Common myeloid progenitor, CD34-positive (primary cell): ENCODE measurements at regions of chr7 and their contacts with region 1.

Region 1: GRCh38 chr7:10973061-10973944 is at the start of gene PHF14:
- DNase-seq: peak; percentile 97 to 99 (median 98)
- H3K4me3 ChIP-seq: peak within 1 kb of the TSS; percentile 65 to 93 (median 83)
- H3K27ac ChIP-seq: peak within 1 kb of the TSS; percentile 52 to 81
- H3K4me1 ChIP-seq: peaks cover 8 to 22% (median 14%) of the 10 kb centered on the region in 4 experiments
- H3K27me3 ChIP-seq: no peaks in the 10 kb centered on the region

Region 2: GRCh38 chr7:10708447-10708846 is 264.9 kb before region 1 on chr7:
- CTCF ChIA-PET with region 1: no interaction called
- POLR2A ChIA-PET with region 1: no interaction called
- DNase-seq: peak; percentile 56 to 72 (median 61)
- H3K4me3 ChIP-seq: no peak overlapping the region
- H3K27ac ChIP-seq: no peak overlapping the region
- H3K4me1 ChIP-seq: peaks cover 9 to 19% (median 12%) of the 10 kb centered on the region in 4 experiments
- H3K27me3 ChIP-seq: no peaks in the 10 kb centered on the region

Region 3: DNA sequence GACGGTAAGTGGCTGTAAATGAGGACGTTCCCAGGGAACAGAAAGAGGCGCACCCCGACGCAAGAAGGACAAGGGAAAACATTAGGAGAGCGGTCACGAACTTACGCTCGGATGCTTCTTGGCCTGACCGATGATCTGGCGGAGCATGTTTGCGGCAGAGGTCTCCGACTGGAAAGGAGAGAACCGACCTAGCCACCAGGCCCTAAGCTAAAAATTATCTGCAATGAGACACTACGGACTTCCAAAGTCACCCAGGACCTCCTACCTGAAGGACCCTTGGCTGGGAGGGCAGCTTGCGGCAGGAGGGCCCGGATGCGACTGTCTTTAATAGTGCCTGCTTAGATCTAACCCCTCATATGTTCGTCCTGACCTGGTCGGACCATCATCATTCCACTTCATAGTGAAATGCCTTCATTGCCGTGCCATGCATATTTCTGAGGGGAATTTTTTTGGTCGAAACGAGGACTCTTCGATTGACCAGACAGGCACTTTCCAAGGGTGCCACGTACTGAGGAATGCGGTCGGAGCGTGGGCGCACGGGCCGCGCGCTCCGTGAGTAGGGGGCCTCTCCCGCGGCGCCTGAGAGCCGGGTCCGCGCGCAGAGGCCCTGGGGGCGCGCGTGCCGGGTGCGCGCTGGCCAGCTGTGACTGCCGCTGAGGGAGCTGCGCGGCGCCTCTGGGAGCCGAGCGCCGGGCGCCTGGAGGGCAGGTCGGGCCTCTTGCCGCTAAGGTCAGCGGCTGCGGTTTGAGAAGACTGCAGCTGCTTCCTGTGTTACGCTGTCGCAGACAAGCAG is 33.2 kb before region 1 on chr7:
- CTCF ChIA-PET with region 1: interaction called, 4 read pairs
- POLR2A ChIA-PET with region 1: interaction called, 13 read pairs
- DNase-seq: peak; percentile 95 to 99 (median 99)
- H3K4me3 ChIP-seq: peak overlapping the region; percentile 83 to 100 (median 97)
- H3K27ac ChIP-seq: peak overlapping the region; percentile 98 to 99
- H3K4me1 ChIP-seq: peaks cover 14 to 30% (median 22%) of the 10 kb centered on the region in 4 experiments
- H3K27me3 ChIP-seq: no peaks in the 10 kb centered on the region

Region 4: GRCh38 chr7:10956528-10956927 is 16.8 kb before region 1 on chr7:
- CTCF ChIA-PET with region 1: no interaction called
- POLR2A ChIA-PET with region 1: no interaction called
- DNase-seq: no peak
- H3K4me3 ChIP-seq: no peak overlapping the region
- H3K27ac ChIP-seq: no peak overlapping the region
- H3K4me1 ChIP-seq: no peaks in the 10 kb centered on the region
- H3K27me3 ChIP-seq: no peaks in the 10 kb centered on the region